CD8-positive, alpha-beta memory T cell (primary cell): ENCODE measurements at regions of chr7 and their contacts with region 1.

Region 1: DNA sequence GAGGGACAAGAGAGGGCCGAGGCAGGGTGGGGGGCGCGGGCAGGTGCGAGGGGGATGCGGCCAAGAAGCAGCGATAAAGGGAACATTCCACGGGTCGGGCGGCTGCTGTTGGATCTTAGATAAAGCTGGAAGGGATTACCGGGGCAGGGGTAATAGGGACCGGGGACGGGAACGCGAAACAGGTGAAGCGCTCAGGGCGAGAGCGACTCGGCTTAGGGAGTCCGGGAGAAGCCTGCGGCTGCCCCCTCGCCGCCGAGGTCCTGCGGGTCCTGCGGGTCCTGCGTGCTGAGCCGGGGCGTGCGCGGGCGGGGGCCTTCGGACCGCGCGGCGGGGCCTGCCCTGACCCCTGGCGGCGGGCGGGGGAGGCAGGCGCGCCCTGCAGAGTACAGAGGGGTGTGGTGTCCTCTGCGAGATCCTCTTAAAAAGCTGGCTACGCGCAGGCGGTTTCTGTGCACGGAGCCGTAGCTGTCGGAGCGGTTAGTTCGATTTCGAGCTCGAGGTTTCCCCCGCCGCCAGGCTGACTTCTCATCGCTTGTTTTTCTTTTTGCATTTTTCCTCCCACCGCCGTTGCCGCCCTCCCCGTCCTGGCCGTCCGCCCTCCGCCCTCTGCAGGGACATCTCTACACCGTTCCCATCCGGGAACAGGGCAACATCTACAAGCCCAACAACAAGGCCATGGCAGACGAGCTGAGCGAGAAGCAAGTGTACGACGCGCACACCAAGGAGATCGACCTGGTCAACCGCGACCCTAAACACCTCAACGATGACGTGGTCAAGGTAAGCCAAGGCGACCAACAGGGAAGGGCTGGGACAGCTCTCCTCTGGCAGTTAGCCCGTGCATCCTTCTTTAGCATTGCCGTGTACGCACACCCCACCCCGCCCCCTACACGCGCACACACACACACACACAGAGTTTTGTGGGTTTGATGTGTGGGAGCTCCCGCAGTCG is 1.4 kb downstream of the CAV1 start:
- DNase-seq: peak; percentile 46 to 75 (median 55)
- H3K4me3 ChIP-seq: peak overlapping the region; percentile 75
- H3K4me3 Mint-ChIP-seq: peak overlapping the region; percentile 77 to 95 (median 85)
- H3K27ac ChIP-seq: no peak overlapping the region
- H3K27ac Mint-ChIP-seq: peak overlapping the region in 1 of 8 donors; percentile 9
- H3K4me1 ChIP-seq: peaks cover 19% of the 10 kb centered on the region
- H3K4me1 Mint-ChIP-seq: peaks cover 29 to 31% (median 29%) of the 10 kb centered on the region in 3 donors
- H3K27me3 ChIP-seq: peaks cover 34% of the 10 kb centered on the region
- H3K27me3 Mint-ChIP-seq: peaks cover 42 to 71% of the 10 kb centered on the region in 2 donors

Region 2: DNA sequence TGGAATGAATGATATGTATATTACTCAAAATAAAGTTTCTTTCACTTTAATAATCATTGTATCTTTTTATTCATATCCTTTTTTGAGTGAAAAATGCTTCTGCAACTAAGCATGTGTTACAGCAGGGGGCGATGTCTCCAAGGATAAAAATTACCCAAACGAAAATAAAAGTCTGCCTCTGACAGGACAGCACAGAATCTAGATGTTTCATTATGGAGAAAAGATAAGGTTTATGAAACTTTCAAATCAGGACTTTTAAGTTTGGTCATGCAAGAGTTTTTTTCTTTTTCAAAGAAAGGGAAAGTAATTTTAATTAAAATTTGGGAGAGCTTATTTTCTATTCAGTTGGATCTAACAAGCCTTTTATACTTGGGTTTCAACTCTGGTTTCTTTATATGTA is 267.5 kb before region 1 on chr7:
- CTCF ChIA-PET with region 1: interaction called, 21 read pairs
- POLR2A ChIA-PET with region 1: interaction called, 3 read pairs
- DNase-seq: peak in 2 of 5 donors; percentile 34 to 42
- H3K4me3 ChIP-seq: no peak overlapping the region
- H3K4me3 Mint-ChIP-seq: no peak overlapping the region
- H3K27ac ChIP-seq: no peak overlapping the region
- H3K27ac Mint-ChIP-seq: peak overlapping the region in 7 of 8 donors; percentile 5 to 78 (median 40)
- H3K4me1 ChIP-seq: no peaks in the 10 kb centered on the region
- H3K4me1 Mint-ChIP-seq: peaks cover 8 to 18% (median 13%) of the 10 kb centered on the region in 3 donors
- H3K27me3 ChIP-seq: no peaks in the 10 kb centered on the region
- H3K27me3 Mint-ChIP-seq: peaks cover 0 to 2% of the 10 kb centered on the region in 2 donors

Region 3: GRCh38 chr7:116443101-116443523 is 83.1 kb before region 1 on chr7:
- CTCF ChIA-PET with region 1: no interaction called
- POLR2A ChIA-PET with region 1: no interaction called
- DNase-seq: no peak
- H3K4me3 ChIP-seq: no peak overlapping the region
- H3K4me3 Mint-ChIP-seq: no peak overlapping the region
- H3K27ac ChIP-seq: no peak overlapping the region
- H3K27ac Mint-ChIP-seq: no peak overlapping the region
- H3K4me1 ChIP-seq: no peaks in the 10 kb centered on the region
- H3K4me1 Mint-ChIP-seq: no peaks in the 10 kb centered on the region
- H3K27me3 ChIP-seq: no peaks in the 10 kb centered on the region
- H3K27me3 Mint-ChIP-seq: peaks cover 9 to 26% of the 10 kb centered on the region in 2 donors

Region 4: GRCh38 chr7:116501425-116502167 is 24.6 kb before region 1 on chr7:
- CTCF ChIA-PET with region 1: interaction called, 10 read pairs
- POLR2A ChIA-PET with region 1: interaction called, 3 read pairs
- DNase-seq: no peak
- H3K4me3 ChIP-seq: no peak overlapping the region
- H3K4me3 Mint-ChIP-seq: peak overlapping the region in 1 of 7 donors; percentile 24
- H3K27ac ChIP-seq: peak overlapping the region; percentile 71
- H3K27ac Mint-ChIP-seq: no peak overlapping the region
- H3K4me1 ChIP-seq: peaks cover 7% of the 10 kb centered on the region
- H3K4me1 Mint-ChIP-seq: peaks cover 10 to 14% (median 13%) of the 10 kb centered on the region in 3 donors
- H3K27me3 ChIP-seq: peaks cover 20% of the 10 kb centered on the region
- H3K27me3 Mint-ChIP-seq: peaks cover 35 to 54% of the 10 kb centered on the region in 2 donors

Region 5: GRCh38 chr7:116511552-116512519 is 14.4 kb before region 1 on chr7:
- CTCF ChIA-PET with region 1: interaction called, 17 read pairs
- POLR2A ChIA-PET with region 1: no interaction called
- DNase-seq: peak in 2 of 5 donors; percentile 54 to 55
- H3K4me3 ChIP-seq: peak overlapping the region; percentile 58
- H3K4me3 Mint-ChIP-seq: peak overlapping the region; percentile 86 to 95 (median 92)
- H3K27ac ChIP-seq: peak overlapping the region; percentile 32
- H3K27ac Mint-ChIP-seq: peak overlapping the region; percentile 9 to 95 (median 88)
- H3K4me1 ChIP-seq: no peaks in the 10 kb centered on the region
- H3K4me1 Mint-ChIP-seq: peaks cover 18 to 25% (median 23%) of the 10 kb centered on the region in 3 donors
- H3K27me3 ChIP-seq: no peaks in the 10 kb centered on the region
- H3K27me3 Mint-ChIP-seq: peaks cover 9 to 18% of the 10 kb centered on the region in 2 donors

Region 6: DNA sequence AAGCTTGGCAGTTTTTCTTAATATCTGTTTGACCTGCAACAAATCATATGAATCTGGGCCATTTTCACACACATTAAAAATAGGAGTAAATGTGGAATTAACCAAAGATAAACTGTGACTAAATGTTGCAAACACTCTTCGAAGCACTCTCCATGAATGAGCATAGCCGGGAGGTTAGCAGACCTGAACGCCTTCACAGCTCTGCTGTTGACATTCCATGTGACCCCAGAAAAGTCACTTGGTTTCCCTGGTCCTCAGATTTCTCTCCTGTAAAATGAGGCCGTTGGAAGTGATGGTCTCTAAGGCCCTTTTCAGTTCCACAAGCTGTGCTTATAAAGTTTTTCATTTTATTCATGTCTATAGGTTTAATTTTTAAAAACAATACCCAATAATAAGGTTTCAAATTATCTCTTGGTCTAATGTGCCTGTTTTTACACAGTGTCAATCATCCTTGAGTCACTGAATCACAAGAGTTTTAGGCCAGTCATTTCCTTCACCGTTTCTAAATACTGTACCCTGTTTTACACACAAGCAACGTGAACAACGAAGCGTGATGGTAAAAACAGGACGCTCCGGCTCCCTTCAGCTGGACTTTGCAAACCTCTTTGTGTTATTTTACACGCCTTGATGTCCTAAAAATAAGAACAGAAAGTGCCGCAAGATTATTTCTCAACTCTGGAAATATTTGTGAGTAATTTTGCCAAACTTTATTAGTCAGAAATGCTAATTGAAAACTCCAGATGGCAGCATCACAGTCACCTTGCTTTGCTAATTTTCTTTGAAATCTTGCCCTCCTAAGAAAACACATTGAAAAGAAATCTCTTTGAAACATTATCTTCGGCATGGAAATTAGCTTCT is 107.2 kb after region 1 on chr7:
- CTCF ChIA-PET with region 1: no interaction called
- POLR2A ChIA-PET with region 1: no interaction called
- DNase-seq: no peak
- H3K4me3 ChIP-seq: no peak overlapping the region
- H3K4me3 Mint-ChIP-seq: no peak overlapping the region
- H3K27ac ChIP-seq: no peak overlapping the region
- H3K27ac Mint-ChIP-seq: no peak overlapping the region
- H3K4me1 ChIP-seq: no peaks in the 10 kb centered on the region
- H3K4me1 Mint-ChIP-seq: peaks cover 0 to 3% (median 0%) of the 10 kb centered on the region in 3 donors
- H3K27me3 ChIP-seq: no peaks in the 10 kb centered on the region
- H3K27me3 Mint-ChIP-seq: peaks cover 0 to 6% of the 10 kb centered on the region in 2 donors

Region 7: DNA sequence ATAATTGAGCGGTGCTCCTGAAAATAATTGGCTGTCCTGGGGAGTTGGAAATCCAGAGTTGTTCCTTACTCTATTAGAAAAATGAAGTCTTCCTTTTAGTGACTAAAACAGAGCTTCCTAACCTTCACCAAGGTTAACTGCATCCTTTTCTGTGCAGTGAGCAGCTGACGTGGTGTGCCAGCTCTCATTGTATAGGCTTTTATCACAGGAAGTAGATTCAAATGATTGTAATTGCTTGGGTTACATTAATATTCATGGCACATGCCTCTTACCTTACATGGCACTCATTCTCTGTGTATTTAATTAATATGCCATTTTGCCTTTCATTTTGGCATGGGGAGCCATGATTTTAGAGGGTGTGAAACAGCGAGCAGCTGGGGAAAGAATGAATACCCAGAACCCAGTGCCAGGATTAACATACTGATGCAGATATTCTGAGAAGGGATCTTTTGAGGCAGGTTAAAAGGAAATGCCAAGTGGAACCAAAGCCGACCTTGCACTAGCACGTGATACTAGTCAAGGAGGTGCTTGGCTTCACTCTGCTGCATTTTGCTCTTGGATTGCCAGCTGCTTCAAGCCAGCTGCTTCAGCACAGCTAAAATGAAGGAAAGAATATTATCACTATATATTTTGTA is 542.4 kb after region 1 on chr7:
- CTCF ChIA-PET with region 1: no interaction called
- POLR2A ChIA-PET with region 1: no interaction called
- DNase-seq: no peak
- H3K4me3 ChIP-seq: no peak overlapping the region
- H3K4me3 Mint-ChIP-seq: peak overlapping the region in 1 of 7 donors; percentile 38
- H3K27ac ChIP-seq: no peak overlapping the region
- H3K27ac Mint-ChIP-seq: peak overlapping the region in 1 of 8 donors; percentile 64
- H3K4me1 ChIP-seq: peaks cover 4% of the 10 kb centered on the region
- H3K4me1 Mint-ChIP-seq: peaks cover 9 to 24% (median 9%) of the 10 kb centered on the region in 3 donors
- H3K27me3 ChIP-seq: no peaks in the 10 kb centered on the region
- H3K27me3 Mint-ChIP-seq: peaks cover 0 to 2% of the 10 kb centered on the region in 2 donors